Heart right ventricle (tissue), 16 donors: ENCODE measurements at regions of chr20 and their contacts with region 1.

Region 1: DNA sequence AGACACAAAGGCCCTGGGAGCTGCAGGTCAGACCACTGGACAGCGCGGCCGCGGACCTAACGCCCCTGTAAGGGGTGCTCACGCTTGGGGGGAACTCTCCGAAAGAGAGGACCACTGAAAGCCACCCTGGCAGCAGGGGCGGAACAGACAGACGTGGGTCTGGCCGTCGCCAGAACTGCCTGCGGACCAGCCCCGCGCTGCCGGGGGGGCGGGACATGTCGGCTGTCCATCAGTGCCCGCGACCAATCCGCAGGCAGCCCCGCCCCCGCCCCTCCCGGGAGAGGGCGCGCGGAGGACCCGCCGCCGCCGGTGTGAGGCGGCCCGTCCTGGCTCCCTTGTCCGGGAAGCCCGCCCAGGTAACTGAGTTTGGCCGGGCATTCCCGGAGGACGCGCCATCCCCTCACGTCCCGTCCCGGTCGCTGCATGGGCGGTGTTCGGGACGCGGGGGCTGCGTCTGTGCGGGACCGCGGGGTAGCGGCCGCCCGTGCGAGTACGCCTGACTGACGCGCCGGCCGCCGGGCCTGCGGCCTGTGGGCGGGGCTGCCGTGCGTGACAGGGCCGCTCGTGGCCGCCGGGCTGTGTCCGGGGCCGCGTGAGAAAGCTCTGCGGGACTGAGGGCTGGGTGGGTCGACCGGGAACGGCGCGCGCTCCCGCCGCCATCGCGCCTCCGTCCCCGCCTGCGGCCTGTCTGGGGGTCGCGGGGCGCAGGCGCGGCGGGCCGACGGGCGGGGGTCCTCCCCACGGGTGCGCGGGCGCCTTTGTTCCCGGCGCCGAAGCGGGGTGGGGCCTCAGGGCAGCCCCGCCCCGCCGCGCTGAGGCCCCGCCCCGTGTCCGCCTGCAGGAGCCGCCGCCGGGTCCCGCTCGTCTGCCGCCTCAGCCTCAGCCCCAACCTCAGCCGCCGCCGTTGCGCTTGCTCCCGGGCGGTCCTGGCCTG is at the start of gene PLCG1:
- DNase-seq: peak; percentile 91 to 93
- ATAC-seq: peak; percentile 83 to 90 (median 86)
- H3K4me3 ChIP-seq: peak within 1 kb of the TSS; percentile 71 to 99 (median 94)
- H3K27ac ChIP-seq: peak within 1 kb of the TSS; percentile 90 to 100 (median 98)
- H3K4me1 ChIP-seq: peaks cover 21 to 58% (median 50%) of the 10 kb centered on the region in 9 donors
- H3K27me3 ChIP-seq: peaks cover 0 to 9% (median 0%) of the 10 kb centered on the region in 7 donors
- CTCF ChIP-seq: no peak
- total RNA-seq, gene PLCG1: 36.6 to 63.6 (median 47.9) TPM

Region 2: DNA sequence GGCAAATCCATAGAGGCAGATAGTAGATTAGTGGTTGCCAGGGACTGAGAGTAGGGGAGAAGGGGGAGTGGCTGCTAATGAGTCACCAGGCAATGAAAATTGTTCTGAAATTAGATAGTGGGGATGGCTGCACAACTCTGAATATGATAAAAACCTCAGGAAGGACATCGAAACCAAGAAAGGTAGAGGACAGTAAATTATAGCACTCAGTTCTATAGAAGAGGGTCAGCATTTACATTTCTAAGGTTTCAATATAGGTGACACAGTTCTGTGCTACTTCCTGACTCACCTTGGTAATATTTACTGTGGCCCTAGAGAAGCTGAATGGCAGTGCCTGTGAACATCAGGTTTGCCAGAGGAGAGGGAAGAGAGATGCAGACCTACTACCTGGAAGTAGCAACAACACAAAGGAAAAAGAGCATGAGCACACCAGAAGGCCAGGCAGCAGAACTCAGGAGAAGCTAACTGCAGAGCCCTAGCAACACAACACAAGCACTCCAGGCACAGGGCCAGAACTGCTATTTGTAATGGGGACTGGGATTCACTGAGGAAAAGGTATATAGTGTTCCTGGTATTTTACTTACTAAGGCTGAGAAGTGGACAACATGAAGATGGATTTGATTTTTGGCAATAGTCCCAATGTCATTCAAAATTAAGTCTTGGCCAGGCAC is 76.3 kb after region 1 on chr20:
- intact Hi-C with region 1: no loop called
- DNase-seq: peak in 1 of 2 donors; percentile 18
- ATAC-seq: peak in 6 of 8 donors; percentile 64 to 89 (median 82)
- H3K4me3 ChIP-seq: no peak overlapping the region
- H3K27ac ChIP-seq: peak overlapping the region in 1 of 10 donors; percentile 11
- H3K4me1 ChIP-seq: peaks cover 0 to 20% (median 13%) of the 10 kb centered on the region in 9 donors
- H3K27me3 ChIP-seq: no peaks in the 10 kb centered on the region
- CTCF ChIP-seq: no peak

Region 3: GRCh38 chr20:41232973-41233926 is 96.3 kb after region 1 on chr20:
- intact Hi-C with region 1: loop called in 4 of 10 experiments (anchors 1 to 5 kb)
- DNase-seq: no peak
- ATAC-seq: peak; percentile 32 to 70 (median 55)
- H3K4me3 ChIP-seq: peak overlapping the region in 2 of 10 donors; percentile 26 to 34
- H3K27ac ChIP-seq: peak overlapping the region; percentile 63 to 88 (median 82)
- H3K4me1 ChIP-seq: peaks cover 24 to 74% (median 69%) of the 10 kb centered on the region in 9 donors
- H3K27me3 ChIP-seq: no peaks in the 10 kb centered on the region
- CTCF ChIP-seq: no peak